Activated CD4-positive, alpha-beta T cell treated with anti-CD3 and anti-CD28 coated beads, Interleukin-2, amount 10 ng/mL, durations not matched to agents 24 days and 14 days (primary cell): ENCODE measurements at regions of chr5 and their contacts with region 1.

Region 1: GRCh38 chr5:75511435-75512384 is at the starts of genes CERT1 and POLK:
- DNase-seq: peak; percentile 99
- H3K4me3 Mint-ChIP-seq: peak within 1 kb of the TSS; percentile 95
- H3K27ac Mint-ChIP-seq: peak within 1 kb of the TSS; percentile 96
- H3K4me1 Mint-ChIP-seq: peaks cover 40% of the 10 kb centered on the region
- H3K27me3 Mint-ChIP-seq: no peaks in the 10 kb centered on the region
- total RNA-seq, gene CERT1: 46.4 and 49.2 TPM in 2 replicates
- total RNA-seq, gene POLK: 40.4 and 41.6 TPM in 2 replicates

Region 2: DNA sequence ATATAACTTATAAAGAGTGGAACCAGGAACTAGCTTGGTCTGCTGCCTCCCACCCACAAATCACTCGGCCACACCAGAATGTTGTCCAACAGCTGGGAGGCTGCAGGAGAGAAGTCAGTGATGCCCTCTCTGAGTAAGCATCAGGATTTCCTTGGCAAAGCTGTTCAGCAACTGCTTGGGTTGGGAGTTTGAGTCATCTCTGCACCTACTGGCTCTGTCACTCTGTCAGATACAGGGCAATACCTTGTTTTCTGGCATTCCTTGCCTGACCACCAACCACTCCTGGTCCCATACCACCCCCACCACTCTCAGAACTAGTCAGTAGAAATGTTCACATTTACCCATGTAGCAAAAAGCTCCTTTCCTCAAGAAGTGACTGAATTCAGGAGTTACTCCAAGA is 422.6 kb before region 1 on chr5:
- intact Hi-C with region 1: no loop called
- DNase-seq: no peak
- H3K4me3 Mint-ChIP-seq: no peak overlapping the region
- H3K27ac Mint-ChIP-seq: no peak overlapping the region
- H3K4me1 Mint-ChIP-seq: peaks cover 9% of the 10 kb centered on the region
- H3K27me3 Mint-ChIP-seq: peaks cover 8% of the 10 kb centered on the region

Region 3: DNA sequence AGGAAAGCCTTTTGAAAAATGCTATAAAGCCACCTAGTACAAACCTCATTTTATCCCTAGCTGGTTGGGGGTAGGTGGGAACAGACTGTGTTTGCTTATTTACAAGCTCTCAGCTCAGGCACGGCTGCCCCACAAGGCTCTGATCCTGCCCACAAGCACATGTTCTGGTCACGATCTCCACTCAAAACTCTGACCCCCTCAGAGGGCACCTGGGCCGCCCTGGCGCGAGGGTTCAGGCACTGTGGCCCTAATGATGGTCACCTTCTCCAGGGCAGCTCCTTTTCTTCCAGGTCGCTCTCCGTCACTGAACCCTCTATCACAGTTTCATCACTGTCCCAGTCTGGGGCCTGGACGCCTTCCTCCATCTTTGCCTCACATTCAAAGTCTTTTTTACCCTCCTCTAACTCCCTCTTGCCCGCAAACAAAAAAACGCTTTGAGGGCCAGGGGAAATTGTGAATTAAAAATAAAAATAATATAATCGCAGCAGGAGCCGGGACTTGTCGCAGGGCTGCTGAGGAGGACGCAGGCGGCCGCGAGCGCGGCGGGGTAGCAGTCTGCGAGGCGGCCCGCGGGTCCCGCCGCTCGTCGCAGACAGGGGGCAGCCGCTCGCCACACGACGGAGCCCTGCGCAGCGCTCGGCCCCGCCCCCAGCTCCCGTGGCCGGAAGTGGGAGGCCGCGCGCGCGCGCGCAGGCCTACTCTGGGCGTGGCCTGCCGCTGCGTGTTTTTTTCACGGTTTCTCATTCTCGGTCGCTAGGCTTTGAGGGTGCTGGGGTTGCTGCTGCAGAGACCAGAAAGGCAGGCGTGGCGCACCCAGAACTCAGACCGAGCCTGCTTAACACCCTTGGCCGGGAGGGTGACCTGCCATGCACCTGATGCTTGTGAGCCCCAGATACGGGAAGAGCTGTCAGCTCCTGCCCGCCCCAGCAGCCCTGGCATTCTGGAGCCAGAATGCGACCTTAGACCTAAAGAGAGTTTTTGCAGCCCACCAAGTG is 275.1 kb before region 1 on chr5 and contains the start of gene ANKRD31:
- intact Hi-C with region 1: loop called (anchors 2 kb)
- DNase-seq: peak; percentile 97
- H3K4me3 Mint-ChIP-seq: peak within 1 kb of the TSS; percentile 96
- H3K27ac Mint-ChIP-seq: peak within 1 kb of the TSS; percentile 93
- H3K4me1 Mint-ChIP-seq: peaks cover 13% of the 10 kb centered on the region
- H3K27me3 Mint-ChIP-seq: no peaks in the 10 kb centered on the region
- total RNA-seq, gene ANKRD31: 0.33 and 0.47 TPM in 2 replicates

Region 4: GRCh38 chr5:75351139-75351926 is 160.4 kb before region 1 on chr5:
- intact Hi-C with region 1: loop called (anchors 5 kb)
- DNase-seq: no peak
- H3K4me3 Mint-ChIP-seq: peak overlapping the region; percentile 3
- H3K27ac Mint-ChIP-seq: peak overlapping the region; percentile 78
- H3K4me1 Mint-ChIP-seq: peaks cover 23% of the 10 kb centered on the region
- H3K27me3 Mint-ChIP-seq: no peaks in the 10 kb centered on the region

Region 5: DNA sequence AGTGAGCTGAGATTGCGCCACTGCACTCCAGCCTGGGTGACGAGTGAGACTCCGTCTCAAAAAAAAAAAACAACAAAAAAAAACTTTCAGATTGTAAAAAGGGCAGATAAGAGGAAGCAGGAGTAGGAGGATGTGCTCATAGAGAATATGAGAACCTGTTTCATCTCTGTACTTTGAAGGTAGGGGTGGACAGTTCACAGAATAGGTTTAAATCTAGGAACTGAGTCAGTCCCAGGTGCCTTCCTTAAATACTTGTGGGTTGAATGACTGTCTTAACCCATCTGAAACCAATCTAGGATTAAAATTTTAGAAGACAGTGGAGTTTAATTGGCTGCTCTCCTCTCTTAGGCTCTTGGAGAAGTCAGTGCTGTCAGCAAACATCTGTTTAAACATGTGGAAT is 12.4 kb after region 1 on chr5:
- intact Hi-C with region 1: loop called (anchors 1 kb)
- DNase-seq: no peak
- H3K4me3 Mint-ChIP-seq: peak overlapping the region; percentile 53
- H3K27ac Mint-ChIP-seq: peak overlapping the region; percentile 80
- H3K4me1 Mint-ChIP-seq: peaks cover 44% of the 10 kb centered on the region
- H3K27me3 Mint-ChIP-seq: no peaks in the 10 kb centered on the region

Region 6: DNA sequence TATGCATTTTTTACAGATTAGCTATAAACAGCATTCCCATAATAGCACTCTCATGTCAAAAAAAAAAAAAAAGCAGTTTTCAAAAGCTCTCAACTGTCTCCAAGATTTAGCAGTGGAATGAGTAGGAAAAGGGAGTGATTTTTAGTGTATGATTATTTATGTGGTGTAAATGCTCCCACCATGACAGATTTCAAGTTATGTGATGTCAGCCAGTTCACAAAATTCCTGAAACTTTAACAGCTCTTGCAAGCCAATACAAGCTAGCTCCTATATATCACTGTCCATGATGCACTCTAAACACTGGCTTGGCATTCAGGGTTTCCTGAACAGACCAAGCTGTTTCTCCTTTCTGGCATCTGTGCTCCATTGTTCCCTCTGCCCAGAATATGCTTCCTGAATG is 91.7 kb after region 1 on chr5:
- intact Hi-C with region 1: no loop called
- DNase-seq: no peak
- H3K4me3 Mint-ChIP-seq: no peak overlapping the region
- H3K27ac Mint-ChIP-seq: no peak overlapping the region
- H3K4me1 Mint-ChIP-seq: peaks cover 25% of the 10 kb centered on the region
- H3K27me3 Mint-ChIP-seq: no peaks in the 10 kb centered on the region

Region 7: DNA sequence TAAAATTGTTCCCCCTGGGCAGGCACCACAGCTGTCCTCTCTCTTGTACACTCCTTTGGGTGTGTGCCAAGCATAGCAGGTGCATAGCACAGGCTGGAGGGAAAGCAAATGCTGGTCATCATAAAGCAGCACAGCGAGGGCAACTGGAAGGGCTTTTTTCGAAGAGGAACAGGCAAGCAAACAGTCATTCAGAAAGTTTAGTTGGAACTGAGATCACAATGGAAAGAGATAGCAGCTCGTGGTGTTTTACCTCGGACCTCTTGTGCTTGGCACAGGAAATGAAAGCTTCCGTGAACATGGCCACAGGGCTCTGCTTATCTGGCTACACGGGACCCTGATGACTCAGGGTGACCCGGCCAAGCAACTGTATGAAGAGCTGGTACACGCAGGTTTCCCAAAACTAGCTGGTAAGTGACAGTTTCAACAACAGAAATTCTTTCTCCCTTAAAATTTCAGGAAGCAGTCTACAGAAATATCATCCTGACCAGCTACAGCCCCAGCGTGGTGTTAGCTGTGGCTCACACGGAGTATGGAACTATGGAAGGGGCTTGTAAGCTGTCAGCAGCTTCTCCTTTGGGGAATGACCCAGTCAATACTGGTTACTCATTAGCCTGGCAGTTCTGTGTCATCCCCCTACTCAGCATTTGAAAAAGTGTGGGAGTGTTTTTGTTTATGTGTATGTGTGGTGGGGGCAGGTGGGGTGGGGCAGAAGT is 157.4 kb after region 1 on chr5:
- intact Hi-C with region 1: loop called (anchors 1 kb)
- DNase-seq: peak; percentile 83
- H3K4me3 Mint-ChIP-seq: peak overlapping the region; percentile 79
- H3K27ac Mint-ChIP-seq: peak overlapping the region; percentile 95
- H3K4me1 Mint-ChIP-seq: peaks cover 36% of the 10 kb centered on the region
- H3K27me3 Mint-ChIP-seq: no peaks in the 10 kb centered on the region

Region 8: GRCh38 chr5:75717082-75717922 is 205.6 kb after region 1 on chr5 and contains the start of gene POC5:
- intact Hi-C with region 1: loop called (anchors 1 kb)
- DNase-seq: peak; percentile 99
- H3K4me3 Mint-ChIP-seq: peak within 1 kb of the TSS; percentile 100
- H3K27ac Mint-ChIP-seq: peak within 1 kb of the TSS; percentile 100
- H3K4me1 Mint-ChIP-seq: peaks cover 29% of the 10 kb centered on the region
- H3K27me3 Mint-ChIP-seq: peaks cover 7% of the 10 kb centered on the region
- total RNA-seq, gene POC5: 20.8 and 21.3 TPM in 2 replicates